ENCODE measurements at regions of chr6 and their contacts with region 1.

Region 1: DNA sequence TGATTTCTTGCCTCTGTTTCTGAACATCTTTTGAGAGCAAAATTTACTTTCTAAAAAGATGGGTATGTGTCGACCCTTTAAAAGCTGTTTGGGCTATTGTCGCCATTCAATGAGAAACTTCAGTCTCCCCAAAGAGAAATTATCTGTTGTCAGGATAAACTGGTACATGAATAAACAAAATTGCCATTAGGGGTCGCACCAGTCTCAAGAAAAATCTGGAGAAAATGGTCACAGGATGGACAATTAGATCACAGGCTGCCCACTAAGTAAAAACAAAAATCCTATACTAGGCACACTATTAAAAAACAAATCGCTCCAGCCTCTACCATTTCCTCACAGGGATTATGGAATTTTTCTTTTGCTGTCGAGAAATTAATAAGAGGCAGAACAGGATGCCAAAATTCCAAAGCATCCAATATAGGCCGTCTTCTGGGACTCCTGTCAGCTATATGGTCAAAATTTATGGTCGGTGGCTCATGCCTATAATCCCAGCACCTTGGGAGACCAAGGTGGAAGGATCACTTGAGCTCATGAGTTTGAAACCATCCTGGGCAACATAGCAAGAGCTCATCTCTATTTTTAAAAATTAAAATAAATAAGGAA is 5.5 kb upstream of the HLA-E start:
- DNase-seq: peak; percentile 86
- H3K4me3 Mint-ChIP-seq: no peak overlapping the region
- H3K27ac Mint-ChIP-seq: no peak overlapping the region
- H3K4me1 Mint-ChIP-seq: peaks cover 41% of the 10 kb centered on the region
- H3K27me3 Mint-ChIP-seq: peaks cover 44% of the 10 kb centered on the region

Region 2: DNA sequence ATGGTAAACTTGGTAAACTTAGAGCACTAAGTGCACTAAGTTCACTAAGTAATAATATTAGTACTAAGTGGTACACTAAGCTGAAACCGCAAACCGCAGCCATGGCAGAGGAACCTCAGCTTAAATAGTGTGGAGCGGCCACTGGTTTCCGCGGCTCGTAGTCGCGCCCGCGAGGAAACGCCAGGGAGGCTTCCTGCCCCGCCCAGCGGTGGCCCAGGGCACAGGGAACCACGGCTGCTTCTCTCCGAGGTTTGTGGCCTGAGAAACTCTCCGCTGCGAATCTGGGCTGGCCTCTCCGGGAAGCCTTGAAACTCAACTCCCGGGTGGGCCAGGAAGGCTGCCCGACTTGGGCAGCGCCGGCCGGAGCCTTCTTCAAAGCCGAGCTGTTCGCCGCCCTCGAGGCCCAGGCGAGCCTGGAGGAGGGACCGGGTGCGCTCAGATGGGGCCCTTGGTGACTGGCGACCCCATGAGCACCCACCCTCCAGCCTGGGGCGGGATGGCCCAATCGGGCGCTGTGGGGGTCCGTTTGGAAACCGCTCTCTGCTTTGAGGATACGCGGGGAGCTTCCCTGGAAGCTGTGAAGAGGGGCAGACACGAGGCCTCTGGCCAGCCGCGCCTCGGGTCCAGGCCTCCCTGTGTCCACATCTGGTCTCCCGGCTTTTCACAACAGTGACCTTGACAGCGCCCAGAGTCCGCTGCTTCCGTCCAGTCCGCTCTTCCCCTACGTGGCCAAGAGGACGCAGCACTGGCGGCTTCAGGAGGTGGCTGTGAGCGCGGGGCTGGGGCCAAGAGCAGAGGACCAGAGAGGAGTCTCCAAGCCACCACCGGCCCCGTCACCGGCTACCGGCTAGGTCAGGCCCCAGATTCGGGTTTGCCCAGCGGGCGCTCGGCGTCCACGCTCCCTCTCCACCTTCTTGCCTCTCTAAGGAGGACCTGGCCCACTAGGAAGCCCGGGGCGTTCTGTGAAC is 19.8 kb before region 1 on chr6:
- intact Hi-C with region 1: loop called (anchors 2 kb)
- DNase-seq: peak; percentile 88
- H3K4me3 Mint-ChIP-seq: no peak overlapping the region
- H3K27ac Mint-ChIP-seq: no peak overlapping the region
- H3K4me1 Mint-ChIP-seq: peaks cover 21% of the 10 kb centered on the region
- H3K27me3 Mint-ChIP-seq: peaks cover 87% of the 10 kb centered on the region

Region 3: GRCh38 chr6:30541515-30542403 is 58.0 kb after region 1 on chr6:
- intact Hi-C with region 1: loop called (anchors 1 kb)
- DNase-seq: peak; percentile 94
- H3K4me3 Mint-ChIP-seq: peak overlapping the region; percentile 79
- H3K27ac Mint-ChIP-seq: peak overlapping the region; percentile 31
- H3K4me1 Mint-ChIP-seq: peaks cover 34% of the 10 kb centered on the region
- H3K27me3 Mint-ChIP-seq: no peaks in the 10 kb centered on the region

Region 4: GRCh38 chr6:30600451-30600961 is 116.7 kb after region 1 on chr6:
- intact Hi-C with region 1: loop called (anchors 1 kb)
- DNase-seq: no peak
- H3K4me3 Mint-ChIP-seq: no peak overlapping the region
- H3K27ac Mint-ChIP-seq: peak overlapping the region; percentile 9
- H3K4me1 Mint-ChIP-seq: peaks cover 16% of the 10 kb centered on the region
- H3K27me3 Mint-ChIP-seq: no peaks in the 10 kb centered on the region

Region 5: DNA sequence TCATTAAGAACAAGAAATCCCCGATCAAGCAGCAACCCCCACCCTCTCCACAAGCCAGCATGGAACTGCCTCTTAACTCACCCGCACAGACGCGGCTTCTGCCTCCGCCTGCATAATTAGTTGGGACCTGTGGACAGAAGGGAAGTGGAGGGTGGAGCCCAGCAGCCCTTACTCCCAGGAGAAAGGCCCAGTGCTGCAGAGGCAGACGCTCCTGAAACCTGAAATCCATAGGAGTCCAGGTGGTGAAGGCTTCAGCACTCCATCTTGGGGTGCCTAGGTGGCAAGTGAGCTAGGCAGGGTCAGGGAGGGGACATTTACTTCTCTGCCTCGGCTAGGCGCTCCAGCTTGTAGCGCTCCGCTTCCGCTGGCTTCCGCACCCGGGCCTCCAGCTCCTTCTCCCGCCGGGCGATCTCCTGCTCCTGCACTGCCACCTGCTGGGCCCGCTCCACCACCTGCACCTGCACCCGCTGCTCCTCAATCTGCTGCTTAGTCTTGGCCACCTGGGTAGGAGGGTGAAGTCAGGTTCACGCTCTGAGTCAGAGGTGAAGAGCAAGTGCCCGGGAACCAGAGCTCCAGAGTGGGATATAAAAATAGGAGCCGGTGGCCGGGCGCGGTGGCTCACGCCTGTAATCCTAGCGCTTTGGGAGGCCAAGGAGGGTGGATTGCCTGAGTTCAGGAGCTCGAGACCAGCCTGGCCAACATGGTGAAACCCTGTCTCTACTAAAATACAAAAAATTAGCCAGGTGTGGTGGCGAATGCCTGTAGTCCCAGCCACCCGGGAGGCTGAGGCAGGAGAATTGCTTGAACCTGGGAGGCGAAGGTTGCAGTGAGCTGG is 247.0 kb after region 1 on chr6:
- intact Hi-C with region 1: loop called (anchors 2 kb)
- DNase-seq: peak; percentile 95
- H3K4me3 Mint-ChIP-seq: peak overlapping the region; percentile 75
- H3K27ac Mint-ChIP-seq: peak overlapping the region; percentile 87
- H3K4me1 Mint-ChIP-seq: peaks cover 49% of the 10 kb centered on the region
- H3K27me3 Mint-ChIP-seq: no peaks in the 10 kb centered on the region

Region 6: GRCh38 chr6:32148289-32149091 is 1664.7 kb after region 1 on chr6:
- intact Hi-C with region 1: no loop called
- DNase-seq: peak; percentile 93
- H3K4me3 Mint-ChIP-seq: peak overlapping the region; percentile 86
- H3K27ac Mint-ChIP-seq: peak overlapping the region; percentile 55
- H3K4me1 Mint-ChIP-seq: peaks cover 29% of the 10 kb centered on the region
- H3K27me3 Mint-ChIP-seq: peaks cover 69% of the 10 kb centered on the region

Measured in activated CD4-positive, alpha-beta T cell treated with anti-CD3 and anti-CD28 coated beads, Interleukin-2, amount 10 ng/mL, durations not matched to agents 24 days and 14 days (primary cell).